Mammary epithelial cell (primary cell): ENCODE measurements at regions of chr11 and their contacts with region 1.

Region 1: GRCh38 chr11:130999997-131000770 is 83.9 kb upstream of the SNX19 start:
- DNase-seq: peak; percentile 88
- H3K4me3 ChIP-seq: no peak overlapping the region
- H3K27ac ChIP-seq: peak overlapping the region; percentile 78
- H3K4me1 ChIP-seq: peaks cover 43% of the 10 kb centered on the region
- H3K27me3 ChIP-seq: no peaks in the 10 kb centered on the region
- CTCF ChIP-seq: no peak

Region 2: GRCh38 chr11:130945896-130946295 is 54.3 kb before region 1 on chr11:
- CTCF ChIA-PET with region 1: no interaction called
- dilution Hi-C with region 1: no loop called
- in situ Hi-C with region 1: no loop called
- intact Hi-C with region 1: loop called (anchors 5 kb)
- DNase-seq: peak; percentile 73
- H3K4me3 ChIP-seq: no peak overlapping the region
- H3K27ac ChIP-seq: peak overlapping the region; percentile 6
- H3K4me1 ChIP-seq: peaks cover 42% of the 10 kb centered on the region
- H3K27me3 ChIP-seq: no peaks in the 10 kb centered on the region
- CTCF ChIP-seq: no peak